WTC11 (cell line): ENCODE measurements at regions of chr3 and their contacts with region 1.

Region 1: DNA sequence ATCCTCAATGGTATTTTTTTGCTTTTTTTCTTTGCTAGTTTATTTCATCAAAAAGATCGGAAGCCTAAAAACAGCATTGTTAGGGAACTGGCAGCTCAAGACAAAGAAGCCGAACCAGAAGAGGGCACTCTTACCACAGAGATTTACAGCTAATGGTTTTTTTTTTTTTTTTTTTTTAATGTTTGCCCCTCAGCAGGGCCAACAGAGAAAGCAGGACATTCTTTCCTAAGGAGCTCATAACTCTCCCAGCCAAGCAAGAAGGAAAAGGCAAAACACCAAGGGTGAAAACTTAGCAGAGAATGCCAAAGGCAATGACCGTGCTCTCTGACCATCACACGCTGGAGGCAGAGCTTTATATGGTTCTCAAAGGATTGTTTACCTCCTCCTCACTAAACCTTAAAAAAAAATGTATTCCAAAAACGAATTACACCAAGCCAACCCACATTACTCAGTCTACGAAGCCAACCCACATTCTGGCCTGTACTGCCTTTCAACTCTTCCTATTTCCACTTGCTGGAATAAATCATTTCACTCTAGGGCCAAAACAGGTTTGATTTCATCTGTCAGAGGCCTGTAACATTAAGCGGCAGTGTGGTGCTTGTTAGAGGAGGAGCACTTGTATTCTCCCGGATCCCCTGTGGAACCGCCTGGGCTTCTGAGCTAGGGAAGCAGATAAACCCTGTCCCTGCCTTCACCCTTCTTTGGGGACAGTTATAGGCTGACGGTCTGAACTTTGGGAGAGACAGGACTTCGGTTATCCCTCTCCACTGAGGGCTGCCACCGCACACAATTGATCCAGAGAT is 35.6 kb upstream of the GYG1 start:
- DNase-seq: no peak
- ATAC-seq: peak; percentile 43
- H3K4me3 Mint-ChIP-seq: no peak overlapping the region
- H3K27ac Mint-ChIP-seq: peak overlapping the region; percentile 8
- H3K4me1 Mint-ChIP-seq: peaks cover 34% of the 10 kb centered on the region
- H3K27me3 Mint-ChIP-seq: no peaks in the 10 kb centered on the region
- CTCF ChIP-seq: no peak

Region 2: DNA sequence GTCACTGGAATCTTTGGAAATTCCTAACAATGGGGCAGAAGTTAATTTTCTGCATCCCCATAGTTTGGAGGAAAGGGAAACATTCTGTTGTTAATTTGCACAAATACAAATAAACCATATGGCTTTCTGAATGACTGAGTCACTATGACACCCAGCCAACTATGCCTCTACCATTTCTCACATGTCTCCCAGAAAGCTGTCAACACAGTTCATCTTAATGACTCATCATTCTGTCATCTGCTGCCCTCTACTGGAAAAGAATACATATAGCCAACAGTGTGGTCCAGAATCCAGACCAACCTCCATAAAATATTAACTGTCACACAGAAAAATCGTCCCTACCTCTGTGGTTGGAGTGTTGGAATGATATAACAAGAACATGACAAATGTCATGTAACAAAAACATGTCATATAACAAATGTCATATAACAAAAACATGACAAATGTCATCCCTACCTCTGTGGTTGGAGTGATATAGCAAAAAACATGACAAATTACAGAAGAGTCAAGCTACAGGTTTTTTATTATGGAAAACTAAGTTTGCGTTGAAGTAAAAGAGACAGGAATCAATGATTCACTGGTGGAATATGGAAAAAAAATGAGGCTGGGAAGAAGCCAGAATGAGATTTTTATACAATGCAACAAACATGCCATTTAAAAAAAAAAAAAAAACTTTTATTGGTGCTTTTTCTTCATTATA is 12.1 kb before region 1 on chr3:
- CTCF ChIA-PET with region 1: interaction called, 21 read pairs
- POLR2A ChIA-PET with region 1: no interaction called
- DNase-seq: no peak
- ATAC-seq: peak; percentile 81
- H3K4me3 Mint-ChIP-seq: no peak overlapping the region
- H3K27ac Mint-ChIP-seq: no peak overlapping the region
- H3K4me1 Mint-ChIP-seq: no peaks in the 10 kb centered on the region
- H3K27me3 Mint-ChIP-seq: no peaks in the 10 kb centered on the region
- CTCF ChIP-seq: peak; percentile 46

Region 3: DNA sequence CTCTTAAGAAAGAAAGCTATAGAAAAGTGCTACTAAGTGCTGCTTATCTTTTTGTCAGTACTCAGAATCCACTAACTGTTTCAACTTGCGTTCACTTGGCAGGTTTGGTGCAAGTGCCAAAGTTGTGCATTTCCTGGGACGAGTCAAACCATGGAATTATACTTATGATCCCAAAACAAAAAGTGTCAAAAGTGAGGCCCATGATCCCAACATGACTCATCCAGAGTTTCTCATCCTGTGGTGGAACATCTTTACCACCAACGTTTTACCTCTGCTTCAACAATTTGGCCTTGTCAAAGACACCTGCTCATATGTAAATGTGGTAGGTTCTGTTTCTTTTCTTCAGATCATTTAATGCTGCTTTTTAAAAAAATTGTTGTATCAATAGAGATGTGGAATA is 68.2 kb after region 1 on chr3:
- CTCF ChIA-PET with region 1: interaction called, 20 read pairs
- POLR2A ChIA-PET with region 1: interaction called, 3 read pairs
- DNase-seq: no peak
- ATAC-seq: no peak
- H3K4me3 Mint-ChIP-seq: no peak overlapping the region
- H3K27ac Mint-ChIP-seq: no peak overlapping the region
- H3K4me1 Mint-ChIP-seq: peaks cover 40% of the 10 kb centered on the region
- H3K27me3 Mint-ChIP-seq: no peaks in the 10 kb centered on the region
- CTCF ChIP-seq: no peak

Region 4: GRCh38 chr3:149274220-149274619 is 318.5 kb after region 1 on chr3:
- CTCF ChIA-PET with region 1: interaction called, 13 read pairs
- POLR2A ChIA-PET with region 1: no interaction called
- DNase-seq: no peak
- ATAC-seq: no peak
- H3K4me3 Mint-ChIP-seq: no peak overlapping the region
- H3K27ac Mint-ChIP-seq: no peak overlapping the region
- H3K4me1 Mint-ChIP-seq: peaks cover 46% of the 10 kb centered on the region
- H3K27me3 Mint-ChIP-seq: no peaks in the 10 kb centered on the region
- CTCF ChIP-seq: no peak

Region 5: GRCh38 chr3:149333176-149333859 is 377.6 kb after region 1 on chr3 and contains the start of gene TM4SF18:
- CTCF ChIA-PET with region 1: interaction called, 31 read pairs
- POLR2A ChIA-PET with region 1: no interaction called
- DNase-seq: no peak
- ATAC-seq: peak; percentile 74
- H3K4me3 Mint-ChIP-seq: peak within 1 kb of the TSS; percentile 28
- H3K27ac Mint-ChIP-seq: peak within 1 kb of the TSS; percentile 85
- H3K4me1 Mint-ChIP-seq: peaks cover 17% of the 10 kb centered on the region; the same call in 1 of the 2 replicates
- H3K27me3 Mint-ChIP-seq: no peaks in the 10 kb centered on the region
- CTCF ChIP-seq: no peak
- total RNA-seq, gene TM4SF18: 1.6 to 2.4 TPM (median 2.2 TPM) in 3 replicates

Region 6: GRCh38 chr3:149487598-149488197 is 532.0 kb after region 1 on chr3:
- CTCF ChIA-PET with region 1: interaction called, 21 read pairs
- POLR2A ChIA-PET with region 1: no interaction called
- DNase-seq: peak; percentile 81
- ATAC-seq: peak; percentile 86
- H3K4me3 Mint-ChIP-seq: no peak overlapping the region
- H3K27ac Mint-ChIP-seq: no peak overlapping the region
- H3K4me1 Mint-ChIP-seq: no peaks in the 10 kb centered on the region
- H3K27me3 Mint-ChIP-seq: no peaks in the 10 kb centered on the region
- CTCF ChIP-seq: peak; percentile 83